Activated CD4-positive, alpha-beta T cell treated with anti-CD3 and anti-CD28 coated beads for 36 hours (primary cell): ENCODE measurements at regions of chr19 and their contacts with region 1.

Region 1: DNA sequence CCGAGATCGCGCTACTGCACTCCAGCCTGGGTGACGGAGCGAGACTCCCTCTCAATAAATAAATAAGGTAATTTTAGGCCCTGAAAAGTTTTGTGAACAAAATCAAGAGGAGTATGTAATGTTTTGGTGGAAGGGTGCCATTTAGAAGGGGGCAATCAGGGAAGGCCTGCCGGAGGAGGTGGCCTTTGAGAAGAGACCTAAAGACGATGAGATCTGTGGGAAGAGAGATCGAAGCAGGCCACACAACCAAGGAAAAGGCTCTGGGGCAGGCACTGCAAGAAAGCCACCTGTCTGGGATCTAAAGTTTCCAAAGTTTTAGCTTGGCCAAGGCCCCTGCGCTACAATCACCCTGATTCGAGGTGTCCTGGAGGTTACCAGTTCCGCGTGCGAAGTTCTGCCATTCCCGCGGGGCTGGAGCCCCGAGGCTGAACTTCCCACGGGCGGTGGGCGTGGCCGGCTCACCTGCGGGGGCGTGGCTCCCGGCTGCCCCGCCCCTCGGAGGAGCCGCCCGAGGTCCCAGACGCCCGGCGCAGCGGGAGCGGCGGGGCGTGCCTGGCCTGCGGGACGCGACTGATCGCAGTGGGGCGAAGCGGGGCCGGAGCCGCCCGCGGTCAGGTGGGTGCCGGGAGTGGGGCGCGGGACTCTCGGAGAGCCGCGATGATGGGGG is at the start of gene KLC3:
- DNase-seq: peak; percentile 65
- ATAC-seq: peak; percentile 29
- H3K4me3 Mint-ChIP-seq: peak within 1 kb of the TSS; percentile 25
- H3K27ac Mint-ChIP-seq: no peak within 1 kb of the TSS
- H3K4me1 Mint-ChIP-seq: peaks cover 6% of the 10 kb centered on the region
- H3K27me3 Mint-ChIP-seq: peaks cover 18% of the 10 kb centered on the region
- total RNA-seq, gene KLC3: 0.11 to 0.14 TPM

Region 2: GRCh38 chr19:44903602-44904425 is 436.6 kb before region 1 on chr19:
- CTCF ChIA-PET with region 1: no interaction called
- POLR2A ChIA-PET with region 1: no interaction called
- intact Hi-C with region 1: loop called in 1 of 2 experiments (anchors 5 kb)
- DNase-seq: peak; percentile 85
- ATAC-seq: peak; percentile 67
- H3K4me3 Mint-ChIP-seq: no peak overlapping the region
- H3K27ac Mint-ChIP-seq: no peak overlapping the region
- H3K4me1 Mint-ChIP-seq: peaks cover 8% of the 10 kb centered on the region
- H3K27me3 Mint-ChIP-seq: peaks cover 17% of the 10 kb centered on the region

Region 3: DNA sequence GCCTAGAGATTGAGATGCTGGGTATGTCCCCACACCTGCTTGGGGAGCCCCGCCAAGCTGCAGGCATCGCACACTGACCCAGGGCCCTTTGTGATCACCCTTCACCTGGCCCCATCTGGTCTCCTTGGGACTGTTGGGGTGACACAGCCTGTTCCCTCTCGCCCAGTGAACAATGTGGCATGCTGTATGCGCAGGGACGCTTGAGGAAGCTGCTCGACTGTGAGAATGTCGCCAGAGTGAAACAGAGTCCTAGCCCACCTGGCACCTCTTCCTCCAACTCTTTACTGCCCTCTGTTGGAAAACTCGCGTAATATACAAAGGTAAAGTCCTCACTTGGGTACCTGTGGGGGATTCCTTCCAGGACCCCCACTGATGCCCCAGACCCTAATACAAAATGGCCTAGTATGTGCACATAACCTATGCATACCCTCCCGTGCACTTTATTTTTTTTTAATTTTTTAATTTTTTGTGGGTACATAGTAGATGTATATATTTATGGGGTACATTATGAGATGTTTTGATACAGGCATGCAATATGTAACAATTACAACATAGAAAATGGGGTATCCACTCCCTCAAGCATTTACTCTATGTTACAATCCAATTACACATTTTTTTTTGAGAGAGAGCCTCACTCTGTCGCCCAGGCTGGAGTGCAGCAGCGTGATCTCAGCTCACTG is 152.8 kb before region 1 on chr19:
- CTCF ChIA-PET with region 1: interaction called, 3 read pairs
- POLR2A ChIA-PET with region 1: no interaction called
- intact Hi-C with region 1: loop called in 1 of 2 experiments (anchors 1 kb)
- DNase-seq: peak; percentile 38
- ATAC-seq: peak; percentile 83
- H3K4me3 Mint-ChIP-seq: no peak overlapping the region
- H3K27ac Mint-ChIP-seq: no peak overlapping the region
- H3K4me1 Mint-ChIP-seq: peaks cover 5% of the 10 kb centered on the region
- H3K27me3 Mint-ChIP-seq: no peaks in the 10 kb centered on the region

Region 4: GRCh38 chr19:45370410-45371204 is 30.2 kb after region 1 on chr19 and contains the start of gene ERCC2:
- CTCF ChIA-PET with region 1: interaction called, 3 read pairs
- POLR2A ChIA-PET with region 1: no interaction called
- intact Hi-C with region 1: loop called in 1 of 2 experiments (anchors 1 kb)
- DNase-seq: peak; percentile 100
- ATAC-seq: peak; percentile 100
- H3K4me3 Mint-ChIP-seq: peak within 1 kb of the TSS; percentile 79
- H3K27ac Mint-ChIP-seq: peak within 1 kb of the TSS; percentile 97
- H3K4me1 Mint-ChIP-seq: peaks cover 8% of the 10 kb centered on the region
- H3K27me3 Mint-ChIP-seq: no peaks in the 10 kb centered on the region
- total RNA-seq, gene ERCC2: 27.5 to 30.4 TPM

Region 5: DNA sequence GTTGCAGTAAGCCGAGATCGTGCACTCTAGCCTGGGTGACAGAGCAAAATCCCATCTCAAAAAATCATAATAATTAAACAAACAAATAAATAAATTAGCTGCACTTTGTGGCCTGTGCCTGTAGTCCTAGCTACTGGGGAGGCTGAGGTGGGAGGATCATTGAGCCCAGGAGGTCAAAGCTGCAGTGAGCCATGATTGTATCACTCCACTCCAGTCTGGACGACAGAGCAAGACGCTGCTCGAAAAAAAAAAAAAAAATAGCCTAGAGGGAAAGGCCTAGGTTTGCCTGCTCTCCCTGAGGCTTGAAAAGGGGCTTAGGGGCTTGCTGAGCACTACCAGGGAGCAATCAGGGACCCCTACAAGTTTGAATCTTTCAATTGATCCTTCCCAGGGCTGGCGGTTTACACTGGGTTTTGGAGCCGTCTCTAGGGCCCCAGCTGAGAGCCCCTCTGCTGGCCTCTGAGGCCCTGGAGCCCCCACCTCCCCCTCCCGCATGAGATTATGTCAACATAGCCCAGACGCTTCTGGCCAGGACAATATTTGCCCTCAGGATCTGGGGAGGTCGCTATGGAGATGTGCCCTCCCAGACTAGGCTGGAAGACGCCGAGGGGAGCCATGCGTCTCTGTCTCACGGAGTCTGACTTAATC is 317.3 kb after region 1 on chr19:
- CTCF ChIA-PET with region 1: no interaction called
- POLR2A ChIA-PET with region 1: no interaction called
- intact Hi-C with region 1: no loop called
- DNase-seq: no peak
- ATAC-seq: no peak
- H3K4me3 Mint-ChIP-seq: no peak overlapping the region
- H3K27ac Mint-ChIP-seq: no peak overlapping the region
- H3K4me1 Mint-ChIP-seq: no peaks in the 10 kb centered on the region
- H3K27me3 Mint-ChIP-seq: peaks cover 13% of the 10 kb centered on the region